PC-3 (cell line): ENCODE measurements at regions of chr7 and their contacts with region 1.

Region 1: GRCh38 chr7:114759347-114760062 is 162.4 kb upstream of the MDFIC start:
- DNase-seq: peak; percentile 90
- ATAC-seq: peak; percentile 82
- H3K4me3 ChIP-seq: peak overlapping the region; percentile 31; the same call in 1 of the 2 replicates
- H3K27ac ChIP-seq: peak overlapping the region; percentile 95
- H3K4me1 ChIP-seq: peaks cover 29% of the 10 kb centered on the region
- H3K27me3 ChIP-seq: no peaks in the 10 kb centered on the region
- CTCF ChIP-seq: no peak

Region 2: GRCh38 chr7:114723308-114723707 is 36.2 kb before region 1 on chr7:
- CTCF ChIA-PET with region 1: no interaction called
- POLR2A ChIA-PET with region 1: no interaction called
- intact Hi-C with region 1: no loop called
- DNase-seq: no peak
- ATAC-seq: no peak
- H3K4me3 ChIP-seq: no peak overlapping the region
- H3K27ac ChIP-seq: no peak overlapping the region
- H3K4me1 ChIP-seq: no peaks in the 10 kb centered on the region
- H3K27me3 ChIP-seq: no peaks in the 10 kb centered on the region
- CTCF ChIP-seq: no peak

Region 3: DNA sequence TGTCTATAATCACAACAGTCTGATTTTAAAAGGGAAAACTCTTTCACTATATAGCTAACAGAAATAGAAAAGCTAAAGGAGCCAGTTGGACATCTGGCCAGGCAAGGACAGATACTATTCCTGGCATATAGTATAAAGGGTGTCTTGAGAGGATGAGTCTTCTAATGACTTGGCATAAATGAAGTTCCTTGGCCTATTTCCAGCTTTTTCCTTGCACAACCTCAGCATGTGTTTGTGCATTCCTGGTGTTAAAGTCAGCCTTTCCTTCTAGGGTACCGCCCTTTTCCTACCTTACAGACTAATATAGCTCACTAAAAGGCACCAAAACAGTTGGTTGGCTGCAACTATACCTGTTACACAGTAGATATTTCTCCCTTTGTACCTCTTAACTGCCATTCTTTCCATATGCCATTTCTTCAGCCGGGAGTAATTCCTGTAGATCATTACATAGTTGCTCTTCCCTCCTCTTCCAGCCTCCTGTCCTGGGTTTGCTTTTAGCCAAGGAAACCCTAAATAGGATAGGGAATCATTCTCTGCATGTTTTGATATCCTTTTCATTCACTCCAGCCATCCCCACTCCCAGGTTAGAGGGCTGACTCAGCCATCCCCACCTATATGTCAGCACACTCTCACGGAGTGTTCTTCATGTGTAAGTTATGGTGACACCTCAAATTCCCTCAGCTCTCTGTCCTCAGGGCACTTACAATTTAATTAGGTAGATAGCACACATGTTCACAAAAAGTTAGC is 60.3 kb after region 1 on chr7:
- CTCF ChIA-PET with region 1: no interaction called
- POLR2A ChIA-PET with region 1: no interaction called
- intact Hi-C with region 1: loop called (anchors 1 kb)
- DNase-seq: peak; percentile 99
- ATAC-seq: peak; percentile 89
- H3K4me3 ChIP-seq: no peak overlapping the region
- H3K27ac ChIP-seq: peak overlapping the region; percentile 71
- H3K4me1 ChIP-seq: peaks cover 43% of the 10 kb centered on the region
- H3K27me3 ChIP-seq: no peaks in the 10 kb centered on the region
- CTCF ChIP-seq: no peak